Activated CD8-positive, alpha-beta T cell treated with anti-CD3 and anti-CD28 coated beads, Interleukin-2, amount 10 ng/mL, durations not matched to agents 7 days and 5 days (primary cell): ENCODE measurements at regions of chr11 and their contacts with region 1.

Region 1: GRCh38 chr11:46352063-46352841 is 5.0 kb downstream of the DGKZ start:
- DNase-seq: peak; percentile 81
- ATAC-seq: peak; percentile 43
- H3K4me3 Mint-ChIP-seq: peak overlapping the region; percentile 78
- H3K27ac Mint-ChIP-seq: peak overlapping the region; percentile 86
- H3K4me1 Mint-ChIP-seq: peaks cover 73% of the 10 kb centered on the region
- H3K27me3 Mint-ChIP-seq: no peaks in the 10 kb centered on the region

Region 2: GRCh38 chr11:46039990-46040389 is 312.3 kb before region 1 on chr11:
- CTCF ChIA-PET with region 1: no interaction called
- POLR2A ChIA-PET with region 1: no interaction called
- DNase-seq: no peak
- ATAC-seq: no peak
- H3K4me3 Mint-ChIP-seq: no peak overlapping the region
- H3K27ac Mint-ChIP-seq: no peak overlapping the region
- H3K4me1 Mint-ChIP-seq: peaks cover 3% of the 10 kb centered on the region
- H3K27me3 Mint-ChIP-seq: no peaks in the 10 kb centered on the region

Region 3: DNA sequence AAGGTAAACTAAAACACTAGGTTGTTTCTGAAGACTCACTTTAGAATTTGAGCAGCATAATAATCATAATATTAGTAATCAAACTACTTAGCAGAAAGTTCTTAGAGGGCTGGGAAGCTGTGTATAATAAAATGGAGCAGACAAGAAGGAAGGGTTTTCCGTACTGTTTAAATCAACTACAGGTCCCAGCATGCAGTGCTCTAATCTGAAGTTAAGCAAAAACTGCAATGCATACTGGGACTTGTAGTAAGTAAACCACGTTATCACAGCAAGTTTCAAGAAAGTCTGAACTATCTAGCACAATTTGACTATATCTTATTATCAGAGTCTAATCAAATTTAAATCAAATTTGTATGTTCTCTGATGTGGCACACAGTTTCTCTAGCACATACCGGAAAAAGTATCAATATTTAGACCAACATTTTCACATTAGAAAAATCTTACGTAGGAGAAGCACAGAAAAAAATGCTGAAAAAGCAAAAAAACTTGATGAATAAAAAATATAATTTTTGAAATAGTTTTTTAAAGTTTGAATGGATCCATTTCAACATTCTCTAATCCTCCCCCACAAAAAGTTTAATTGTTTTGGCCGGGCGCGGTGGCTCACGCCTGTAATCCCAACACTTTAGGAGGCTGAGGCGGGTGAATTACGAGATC is 239.2 kb before region 1 on chr11:
- CTCF ChIA-PET with region 1: no interaction called
- POLR2A ChIA-PET with region 1: no interaction called
- DNase-seq: peak; percentile 53
- ATAC-seq: peak; percentile 95
- H3K4me3 Mint-ChIP-seq: no peak overlapping the region
- H3K27ac Mint-ChIP-seq: no peak overlapping the region
- H3K4me1 Mint-ChIP-seq: peaks cover 46% of the 10 kb centered on the region
- H3K27me3 Mint-ChIP-seq: no peaks in the 10 kb centered on the region

Region 4: GRCh38 chr11:46308631-46309419 is 43.4 kb before region 1 on chr11:
- CTCF ChIA-PET with region 1: interaction called, 10 read pairs
- POLR2A ChIA-PET with region 1: no interaction called
- DNase-seq: peak; percentile 75
- ATAC-seq: peak; percentile 78
- H3K4me3 Mint-ChIP-seq: no peak overlapping the region
- H3K27ac Mint-ChIP-seq: no peak overlapping the region
- H3K4me1 Mint-ChIP-seq: peaks cover 16% of the 10 kb centered on the region
- H3K27me3 Mint-ChIP-seq: peaks cover 3% of the 10 kb centered on the region

Region 5: DNA sequence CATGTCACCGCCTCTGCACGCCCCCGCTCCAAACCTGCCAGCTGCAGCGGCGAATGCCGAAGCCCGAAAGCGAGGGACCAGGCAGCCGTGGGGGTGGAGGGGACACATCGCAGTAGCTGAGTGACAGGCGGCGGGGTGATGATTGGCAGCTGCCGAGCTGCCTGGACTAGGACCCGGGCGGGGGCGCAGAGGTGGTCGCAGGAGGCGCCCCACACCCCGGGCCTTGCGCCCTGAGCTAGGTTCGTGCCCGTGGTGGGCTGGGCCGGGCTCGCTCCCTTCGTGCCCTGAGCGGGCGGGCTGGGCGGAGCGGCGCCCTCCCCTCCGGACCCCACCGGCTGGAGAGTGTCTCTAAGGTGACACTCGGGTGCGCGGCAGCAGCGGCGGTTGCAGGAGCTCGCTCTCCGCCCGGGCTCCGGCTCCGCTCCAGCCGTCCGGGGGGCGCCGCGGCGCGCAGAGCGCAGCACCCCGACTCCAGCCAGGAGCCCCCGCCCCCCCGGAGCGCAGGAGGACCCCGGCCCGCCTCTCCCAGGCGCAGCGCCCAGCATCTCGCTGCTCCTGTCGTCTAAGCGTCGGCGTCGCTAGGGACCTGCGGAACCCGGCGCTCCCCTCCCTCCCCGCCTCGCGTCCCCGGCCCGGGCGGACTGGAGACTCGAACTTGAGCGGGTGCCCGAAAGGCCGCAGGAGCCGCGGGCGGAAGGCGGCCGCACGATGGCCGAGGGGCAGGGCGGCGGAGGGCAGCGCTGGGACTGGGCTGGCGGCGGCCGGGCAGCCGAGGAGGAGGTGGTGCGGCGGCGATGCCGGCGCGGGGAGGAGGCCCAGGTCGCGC is 19.5 kb before region 1 on chr11:
- CTCF ChIA-PET with region 1: interaction called, 58 read pairs
- POLR2A ChIA-PET with region 1: interaction called, 3 read pairs
- DNase-seq: no peak
- ATAC-seq: peak; percentile 43
- H3K4me3 Mint-ChIP-seq: peak overlapping the region; percentile 34
- H3K27ac Mint-ChIP-seq: no peak overlapping the region
- H3K4me1 Mint-ChIP-seq: peaks cover 46% of the 10 kb centered on the region
- H3K27me3 Mint-ChIP-seq: peaks cover 47% of the 10 kb centered on the region

Region 6: DNA sequence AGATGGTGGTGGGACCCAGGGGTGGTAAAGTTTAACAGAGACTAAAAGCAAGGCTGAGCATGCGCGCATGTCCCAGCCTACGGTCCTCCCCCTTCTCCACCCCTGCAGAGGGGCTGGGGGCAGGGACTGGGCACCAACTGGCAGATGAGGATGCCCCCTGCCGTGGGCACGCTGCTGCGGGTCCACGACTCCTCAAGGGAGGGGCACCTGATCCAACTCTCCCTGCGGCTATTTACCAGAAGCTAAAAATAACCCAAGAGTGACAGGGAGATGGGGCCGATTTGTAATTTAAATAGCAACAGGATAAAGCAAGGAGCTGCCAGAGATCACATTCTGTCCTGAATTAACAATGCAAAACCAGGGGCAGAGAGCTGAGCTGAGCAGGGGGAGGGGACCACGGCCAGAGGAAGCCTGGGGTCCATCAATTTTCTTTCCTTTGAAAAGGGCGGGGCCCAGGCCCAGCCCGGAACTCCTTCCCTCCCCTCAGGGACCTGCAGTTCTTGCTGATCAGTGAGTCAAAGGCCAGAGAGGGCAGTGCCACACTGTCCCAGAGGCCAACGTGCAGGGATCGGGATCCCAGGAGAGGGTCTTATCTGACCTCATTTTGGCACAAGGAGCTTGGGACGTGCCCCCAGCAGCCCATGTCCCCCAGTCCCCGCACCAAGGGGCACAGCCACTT is 13.1 kb before region 1 on chr11:
- CTCF ChIA-PET with region 1: interaction called, 58 read pairs
- POLR2A ChIA-PET with region 1: no interaction called
- DNase-seq: no peak
- ATAC-seq: no peak
- H3K4me3 Mint-ChIP-seq: no peak overlapping the region
- H3K27ac Mint-ChIP-seq: no peak overlapping the region
- H3K4me1 Mint-ChIP-seq: peaks cover 28% of the 10 kb centered on the region
- H3K27me3 Mint-ChIP-seq: peaks cover 17% of the 10 kb centered on the region

Region 7: DNA sequence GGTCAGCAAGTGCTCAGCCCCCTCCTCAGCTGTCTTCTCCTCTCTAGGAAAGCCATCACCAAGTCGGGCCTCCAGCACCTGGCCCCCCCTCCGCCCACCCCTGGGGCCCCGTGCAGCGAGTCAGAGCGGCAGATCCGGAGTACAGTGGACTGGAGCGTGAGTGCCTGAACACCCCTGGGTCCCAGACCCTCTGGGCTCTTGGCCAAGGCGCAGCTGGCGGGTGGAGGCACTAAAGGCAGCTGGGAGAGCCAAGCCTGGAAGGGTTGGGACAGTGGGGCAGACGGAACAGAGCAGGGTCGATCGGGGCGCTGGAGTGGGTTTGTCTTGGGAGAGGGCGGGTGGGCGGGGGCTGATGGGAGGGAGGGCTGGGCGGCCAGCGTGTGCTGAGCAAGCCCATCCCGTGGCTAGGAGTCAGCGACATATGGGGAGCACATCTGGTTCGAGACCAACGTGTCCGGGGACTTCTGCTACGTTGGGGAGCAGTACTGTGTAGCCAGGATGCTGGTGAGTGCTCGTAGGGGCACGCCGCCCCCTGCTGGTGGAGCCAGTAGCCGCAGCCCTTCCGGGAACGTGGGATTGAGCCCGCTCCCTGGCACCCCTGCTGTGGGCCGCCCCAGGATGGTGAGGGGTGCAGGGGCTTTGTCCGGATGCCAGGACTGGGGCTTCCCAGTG is 15.1 kb after region 1 on chr11:
- CTCF ChIA-PET with region 1: interaction called, 381 read pairs
- POLR2A ChIA-PET with region 1: interaction called, 77 read pairs
- DNase-seq: peak; percentile 84
- ATAC-seq: peak; percentile 92
- H3K4me3 Mint-ChIP-seq: no peak overlapping the region
- H3K27ac Mint-ChIP-seq: peak overlapping the region; percentile 52
- H3K4me1 Mint-ChIP-seq: peaks cover 38% of the 10 kb centered on the region
- H3K27me3 Mint-ChIP-seq: no peaks in the 10 kb centered on the region

Region 8: GRCh38 chr11:46392421-46393230 is 40.4 kb after region 1 on chr11:
- CTCF ChIA-PET with region 1: interaction called, 11 read pairs
- POLR2A ChIA-PET with region 1: no interaction called
- DNase-seq: peak; percentile 86
- ATAC-seq: peak; percentile 85
- H3K4me3 Mint-ChIP-seq: peak overlapping the region; percentile 66
- H3K27ac Mint-ChIP-seq: no peak overlapping the region
- H3K4me1 Mint-ChIP-seq: peaks cover 28% of the 10 kb centered on the region
- H3K27me3 Mint-ChIP-seq: peaks cover 43% of the 10 kb centered on the region